ENCODE measurements at regions of chr15 and their contacts with region 1.

Region 1: DNA sequence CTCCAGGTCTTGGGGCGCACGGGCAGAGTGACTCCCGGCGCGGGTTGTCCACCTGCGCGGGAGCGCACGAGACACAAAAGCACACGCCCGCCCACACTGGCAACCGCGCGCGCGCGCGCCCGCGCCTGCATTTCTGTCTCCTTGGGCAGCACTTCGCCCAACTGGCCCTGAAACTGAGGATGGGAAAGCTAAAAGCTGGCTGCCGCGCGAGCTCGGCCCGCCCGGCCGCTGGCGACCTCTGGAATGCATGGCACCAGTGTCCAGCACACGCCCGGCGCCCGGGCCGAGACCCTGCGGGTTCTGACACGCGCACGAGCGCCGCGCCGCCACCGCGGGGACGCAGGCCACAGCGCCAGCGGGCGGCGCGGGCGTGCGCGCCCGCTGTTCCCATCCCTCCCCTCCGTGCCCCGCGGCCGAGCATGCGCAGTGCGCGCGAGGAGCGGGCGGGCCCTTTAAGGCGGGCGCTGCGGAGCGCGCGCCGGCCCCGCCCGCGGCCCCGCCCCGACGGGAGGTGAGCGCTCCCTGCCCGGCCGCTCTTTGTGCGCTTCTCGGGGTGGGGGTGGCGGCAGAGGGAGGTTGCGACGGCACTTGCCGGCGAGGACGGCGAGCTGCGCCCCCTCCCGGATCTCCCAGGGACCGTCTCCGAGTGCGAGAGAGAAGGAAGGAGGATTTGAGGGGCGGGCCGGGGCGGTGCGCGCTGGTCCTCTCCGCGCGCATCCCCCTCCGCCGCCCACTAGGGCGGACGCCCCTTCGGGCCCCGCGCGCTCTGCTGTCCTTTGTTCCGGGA is 1.0 kb upstream of the MEX3B start:
- DNase-seq: peak; percentile 33
- H3K4me3 ChIP-seq: peak overlapping the region; percentile 86
- CTCF ChIP-seq: peak; percentile 92

Region 2: DNA sequence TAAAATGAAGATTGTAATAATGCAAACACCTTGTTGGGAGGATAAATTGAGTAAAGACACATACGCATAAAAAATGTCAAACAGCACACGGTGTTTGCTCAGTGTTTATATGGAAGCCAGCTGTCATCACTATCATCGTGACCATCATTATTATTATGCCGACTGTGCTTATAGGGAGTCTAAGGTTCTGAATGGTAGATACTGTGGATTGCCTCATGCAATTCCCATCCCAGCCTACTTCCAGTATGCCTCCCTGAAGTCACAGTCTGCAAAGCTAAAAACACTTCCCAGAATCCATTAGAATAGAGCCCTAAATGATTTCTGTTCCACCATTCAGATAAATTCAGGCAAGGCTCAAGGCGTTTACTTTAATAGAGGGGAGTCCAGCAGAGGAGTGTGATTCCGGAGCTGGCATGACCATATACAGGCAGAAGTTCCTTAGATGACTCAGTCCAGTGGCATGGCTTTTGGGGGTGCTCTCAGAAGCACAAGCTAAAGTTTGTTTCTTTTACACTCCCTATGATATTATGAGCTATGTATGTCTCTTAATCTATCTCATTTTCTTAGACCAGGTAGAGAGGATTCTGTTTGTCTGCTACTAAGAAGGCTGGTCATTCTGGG is 149.7 kb before region 1 on chr15:
- CTCF ChIA-PET with region 1: no interaction called
- POLR2A ChIA-PET with region 1: no interaction called
- DNase-seq: peak; percentile 49
- H3K4me3 ChIP-seq: no peak overlapping the region
- CTCF ChIP-seq: no peak

Region 3: GRCh38 chr15:82030176-82030687 is 16.6 kb before region 1 on chr15:
- CTCF ChIA-PET with region 1: interaction called, 16 read pairs
- POLR2A ChIA-PET with region 1: no interaction called
- DNase-seq: no peak
- H3K4me3 ChIP-seq: no peak overlapping the region
- CTCF ChIP-seq: no peak

Region 4: GRCh38 chr15:82056958-82057823 is 10.3 kb after region 1 on chr15:
- CTCF ChIA-PET with region 1: interaction called, 12 read pairs
- POLR2A ChIA-PET with region 1: no interaction called
- DNase-seq: no peak
- H3K4me3 ChIP-seq: no peak overlapping the region
- CTCF ChIP-seq: no peak

Region 5: DNA sequence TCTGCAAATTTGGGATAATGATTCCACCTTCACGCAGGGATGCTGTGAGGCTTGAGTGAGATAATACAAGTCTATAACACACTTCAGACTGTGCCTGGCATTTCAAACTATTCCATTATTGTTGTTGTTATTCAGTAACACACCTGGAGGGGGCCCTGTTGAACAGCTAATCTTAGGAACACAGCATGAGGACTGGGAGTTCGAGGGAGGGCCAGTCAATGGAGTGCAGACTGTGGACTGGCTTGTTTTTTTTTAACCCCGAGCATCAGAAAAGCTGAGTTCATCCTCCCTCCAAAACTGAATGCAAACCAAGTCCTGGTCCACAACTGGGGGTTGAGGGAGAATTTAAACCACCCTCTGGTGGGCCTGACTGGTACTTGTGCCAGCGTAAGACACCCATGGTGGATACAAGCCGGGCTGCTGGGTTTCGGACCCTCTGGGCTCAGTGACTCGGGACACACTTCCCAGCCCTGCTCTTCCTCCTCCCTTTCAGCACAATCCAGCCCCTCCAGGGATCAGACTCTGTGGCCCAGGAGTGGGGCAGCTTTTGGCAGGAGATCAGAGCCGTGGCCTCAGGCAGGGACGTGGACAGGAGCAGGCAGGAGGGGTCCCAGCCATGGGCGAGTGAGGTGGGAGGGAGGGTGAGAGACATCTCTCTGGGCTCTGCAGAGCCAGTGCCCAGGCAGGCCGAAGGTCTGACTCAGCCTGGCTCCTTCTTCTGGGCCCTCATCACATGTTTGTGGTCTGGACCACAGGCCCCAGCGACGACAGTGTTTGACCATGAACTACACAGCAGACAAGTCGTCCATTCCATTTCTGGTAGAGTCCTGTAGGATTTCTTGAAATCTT is 35.3 kb after region 1 on chr15:
- CTCF ChIA-PET with region 1: interaction called, 12 read pairs
- POLR2A ChIA-PET with region 1: interaction called, 3 read pairs
- DNase-seq: peak; percentile 93
- H3K4me3 ChIP-seq: no peak overlapping the region
- CTCF ChIP-seq: peak; percentile 29

Region 6: GRCh38 chr15:82140886-82141285 is 94.0 kb after region 1 on chr15:
- CTCF ChIA-PET with region 1: no interaction called
- POLR2A ChIA-PET with region 1: no interaction called
- DNase-seq: no peak
- H3K4me3 ChIP-seq: no peak overlapping the region
- CTCF ChIP-seq: no peak